ENCODE measurements at regions of chr10 and their contacts with region 1.

Region 1: GRCh38 chr10:50909334-50910014 is 24.0 kb upstream of the A1CF start:
- DNase-seq: no peak
- H3K4me3 ChIP-seq: no peak overlapping the region
- H3K27ac ChIP-seq: no peak overlapping the region
- H3K4me1 ChIP-seq: no peaks in the 10 kb centered on the region
- CTCF ChIP-seq: no peak

Region 2: GRCh38 chr10:50963063-50963462 is 53.6 kb after region 1 on chr10:
- CTCF ChIA-PET with region 1: no interaction called
- POLR2A ChIA-PET with region 1: no interaction called
- intact Hi-C with region 1: loop called (anchors 5 kb)
- DNase-seq: no peak
- H3K4me3 ChIP-seq: no peak overlapping the region
- H3K27ac ChIP-seq: no peak overlapping the region
- H3K4me1 ChIP-seq: no peaks in the 10 kb centered on the region
- CTCF ChIP-seq: no peak